RWPE1 (cell line): ENCODE measurements at regions of chr5 and their contacts with region 1.

Region 1: GRCh38 chr5:28766565-28767158 is 1728.3 kb upstream of the CDH9 start:
- DNase-seq: peak; percentile 25
- H3K27ac ChIP-seq: no peak overlapping the region
- CTCF ChIP-seq: peak; percentile 55; the same call in 1 of the 2 replicates

Region 2: DNA sequence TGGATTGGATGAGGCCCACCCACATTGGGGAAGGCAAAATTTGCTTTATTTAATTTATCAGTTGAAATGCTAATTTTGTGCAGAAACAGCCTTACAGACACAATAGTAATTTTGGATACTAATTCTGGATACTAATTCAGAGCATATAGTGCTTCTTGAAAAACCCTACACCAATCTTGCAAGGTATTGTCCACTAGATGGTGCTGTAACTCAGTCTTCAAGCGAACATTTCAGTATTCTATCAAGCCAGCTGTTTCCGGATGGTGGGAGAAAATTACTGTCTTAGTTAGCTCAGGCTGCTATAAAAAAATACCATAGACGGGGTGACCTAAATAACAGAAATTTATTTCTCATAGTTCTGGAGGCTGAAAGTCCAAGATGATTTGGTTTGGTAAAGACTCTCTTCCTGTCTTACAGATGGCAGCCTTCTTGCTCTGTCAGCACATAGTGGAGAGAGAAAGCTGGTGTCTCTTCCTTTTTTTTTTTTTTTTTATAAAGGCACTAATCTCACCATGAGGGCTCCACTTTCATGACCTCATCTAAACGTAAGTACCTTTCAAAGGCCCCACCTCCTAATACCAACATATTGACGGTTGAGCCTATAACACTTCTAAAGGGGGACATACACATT is 421.7 kb before region 1 on chr5:
- CTCF ChIA-PET with region 1: interaction called, 12 read pairs
- POLR2A ChIA-PET with region 1: no interaction called
- DNase-seq: peak; percentile 19
- H3K27ac ChIP-seq: no peak overlapping the region
- CTCF ChIP-seq: peak; percentile 53

Region 3: DNA sequence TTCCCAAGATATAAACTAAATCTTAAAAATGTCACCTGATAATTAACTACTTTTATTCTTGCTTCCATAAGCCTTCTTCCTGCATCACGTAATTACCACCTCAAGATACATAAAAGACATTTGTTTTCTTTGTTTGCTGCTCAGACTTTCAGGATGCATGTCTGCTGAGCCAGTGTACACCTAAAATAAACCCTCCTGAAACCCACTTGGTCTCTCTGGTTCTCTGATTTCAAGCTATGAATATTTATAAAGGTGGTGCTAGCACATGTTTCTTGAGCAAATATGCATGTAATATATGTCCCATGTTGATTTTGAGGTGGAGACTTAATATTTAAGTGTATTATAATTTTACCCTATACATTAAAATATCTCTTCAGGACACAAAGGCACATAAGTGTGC is 100.6 kb before region 1 on chr5:
- CTCF ChIA-PET with region 1: no interaction called
- POLR2A ChIA-PET with region 1: no interaction called
- DNase-seq: no peak
- H3K27ac ChIP-seq: no peak overlapping the region
- CTCF ChIP-seq: no peak